Activated CD8-positive, alpha-beta T cell treated with anti-CD3 and anti-CD28 coated beads for 36 hours (primary cell): ENCODE measurements at regions of chr11 and their contacts with region 1.

Region 1: DNA sequence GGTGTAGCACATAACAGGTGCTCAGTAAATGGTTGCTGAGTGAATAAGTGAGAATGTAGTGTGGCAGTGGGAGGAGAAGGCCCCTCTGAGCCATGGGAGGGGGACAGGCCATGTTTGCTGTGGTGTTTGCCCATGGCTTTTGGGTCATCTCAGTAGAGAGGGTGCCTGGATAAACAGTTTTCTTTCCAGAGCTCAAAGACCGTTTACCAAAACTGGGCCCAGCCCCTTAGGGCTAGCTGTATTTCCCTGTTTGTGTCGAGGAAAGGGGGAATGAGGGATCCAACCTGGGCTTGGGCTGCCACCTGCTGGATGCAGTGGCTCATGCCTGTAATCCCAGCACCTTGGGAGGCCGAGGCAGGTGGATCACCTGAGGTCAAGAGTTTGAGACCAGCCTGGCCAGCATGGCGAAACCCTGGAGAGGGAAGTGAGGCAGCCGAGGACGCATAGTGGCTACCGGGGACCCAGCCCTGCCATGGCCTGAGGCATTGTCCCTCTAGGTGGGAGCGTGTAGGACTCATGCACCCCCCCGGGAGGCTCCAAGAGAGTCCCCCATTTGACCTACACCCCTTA is 8.7 kb upstream of the LTO1 start:
- DNase-seq: no peak
- ATAC-seq: no peak
- H3K4me3 Mint-ChIP-seq: no peak overlapping the region
- H3K27ac Mint-ChIP-seq: no peak overlapping the region
- H3K4me1 Mint-ChIP-seq: peaks cover 7% of the 10 kb centered on the region
- H3K27me3 Mint-ChIP-seq: peaks cover 13% of the 10 kb centered on the region
- CTCF ChIP-seq: no peak

Region 2: GRCh38 chr11:69657911-69658625 is 25.8 kb before region 1 on chr11:
- CTCF ChIA-PET with region 1: no interaction called
- POLR2A ChIA-PET with region 1: no interaction called
- intact Hi-C with region 1: no loop called
- DNase-seq: no peak
- ATAC-seq: no peak
- H3K4me3 Mint-ChIP-seq: no peak overlapping the region
- H3K27ac Mint-ChIP-seq: no peak overlapping the region
- H3K4me1 Mint-ChIP-seq: no peaks in the 10 kb centered on the region
- H3K27me3 Mint-ChIP-seq: no peaks in the 10 kb centered on the region
- CTCF ChIP-seq: no peak

Region 3: GRCh38 chr11:70108250-70108649 is 424.4 kb after region 1 on chr11:
- CTCF ChIA-PET with region 1: no interaction called
- POLR2A ChIA-PET with region 1: no interaction called
- intact Hi-C with region 1: no loop called
- DNase-seq: no peak
- ATAC-seq: no peak
- H3K4me3 Mint-ChIP-seq: no peak overlapping the region
- H3K27ac Mint-ChIP-seq: no peak overlapping the region
- H3K4me1 Mint-ChIP-seq: peaks cover 4% of the 10 kb centered on the region
- H3K27me3 Mint-ChIP-seq: peaks cover 5% of the 10 kb centered on the region
- CTCF ChIP-seq: no peak

Region 4: GRCh38 chr11:70191495-70192140 is 507.8 kb after region 1 on chr11:
- CTCF ChIA-PET with region 1: interaction called, 3 read pairs
- POLR2A ChIA-PET with region 1: no interaction called
- intact Hi-C with region 1: loop called (anchors 10 kb)
- DNase-seq: peak; percentile 79
- ATAC-seq: peak; percentile 83
- H3K4me3 Mint-ChIP-seq: no peak overlapping the region
- H3K27ac Mint-ChIP-seq: no peak overlapping the region
- H3K4me1 Mint-ChIP-seq: no peaks in the 10 kb centered on the region
- H3K27me3 Mint-ChIP-seq: peaks cover 5% of the 10 kb centered on the region
- CTCF ChIP-seq: peak; percentile 82